Adrenal gland (tissue), 19 donors: ENCODE measurements at regions of chr1 and their contacts with region 1.

Region 1: GRCh38 chr1:212630158-212630900 is 21.8 kb downstream of the ATF3 start:
- DNase-seq: peak; percentile 56 to 85 (median 78)
- H3K4me3 ChIP-seq: no peak overlapping the region
- H3K27ac ChIP-seq: no peak overlapping the region
- H3K4me1 ChIP-seq: no peaks in the 10 kb centered on the region
- H3K27me3 ChIP-seq: no peaks in the 10 kb centered on the region
- CTCF ChIP-seq: peak; percentile 84 to 92 (median 86)
- POLR2A ChIP-seq: no peak

Region 2: DNA sequence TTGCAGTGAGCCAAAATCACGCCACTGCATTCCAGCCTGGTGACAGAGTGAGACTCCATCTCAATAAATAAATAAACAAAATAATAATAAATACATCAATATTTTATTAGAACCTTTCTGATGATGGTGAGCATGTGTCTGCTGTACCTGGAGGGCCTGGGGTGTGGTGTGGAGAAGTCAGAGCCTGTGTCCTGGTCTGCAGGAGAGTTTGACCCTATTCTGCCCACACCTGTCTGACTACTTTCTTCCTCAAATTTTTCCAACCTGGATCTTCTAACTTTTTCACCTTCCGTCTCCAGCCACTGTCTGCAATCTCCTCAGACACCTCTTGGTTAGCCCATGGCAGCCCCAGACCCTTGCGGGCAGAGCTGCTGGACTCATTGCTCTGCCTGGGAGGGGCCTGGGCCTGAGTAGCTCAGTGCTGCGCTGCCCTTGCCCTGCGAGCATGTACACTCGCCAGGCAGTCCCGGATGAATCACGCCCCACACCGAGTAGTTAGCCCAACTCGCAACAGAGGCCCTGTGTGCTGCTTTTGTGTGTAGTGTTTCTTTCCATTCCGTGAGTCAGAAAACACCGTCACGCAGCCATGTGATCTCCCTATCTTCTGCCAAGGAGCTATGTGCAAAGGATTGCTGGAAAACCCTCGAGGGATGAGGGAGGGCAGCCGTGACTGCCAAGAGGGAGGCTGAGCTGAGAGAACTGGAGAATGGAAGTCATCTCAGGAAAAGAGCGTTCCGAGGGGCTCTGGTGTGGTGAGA is 160.4 kb before region 1 on chr1:
- intact Hi-C with region 1: loop called (anchors 5 kb)
- DNase-seq: peak; percentile 80 to 98 (median 97)
- H3K4me3 ChIP-seq: no peak overlapping the region
- H3K27ac ChIP-seq: peak overlapping the region in 4 of 5 donors; percentile 33 to 91 (median 76)
- H3K4me1 ChIP-seq: peaks cover 0 to 4% of the 10 kb centered on the region in 2 donors
- H3K27me3 ChIP-seq: no peaks in the 10 kb centered on the region
- CTCF ChIP-seq: no peak
- POLR2A ChIP-seq: peak in 1 of 2 donors; percentile 51

Region 3: DNA sequence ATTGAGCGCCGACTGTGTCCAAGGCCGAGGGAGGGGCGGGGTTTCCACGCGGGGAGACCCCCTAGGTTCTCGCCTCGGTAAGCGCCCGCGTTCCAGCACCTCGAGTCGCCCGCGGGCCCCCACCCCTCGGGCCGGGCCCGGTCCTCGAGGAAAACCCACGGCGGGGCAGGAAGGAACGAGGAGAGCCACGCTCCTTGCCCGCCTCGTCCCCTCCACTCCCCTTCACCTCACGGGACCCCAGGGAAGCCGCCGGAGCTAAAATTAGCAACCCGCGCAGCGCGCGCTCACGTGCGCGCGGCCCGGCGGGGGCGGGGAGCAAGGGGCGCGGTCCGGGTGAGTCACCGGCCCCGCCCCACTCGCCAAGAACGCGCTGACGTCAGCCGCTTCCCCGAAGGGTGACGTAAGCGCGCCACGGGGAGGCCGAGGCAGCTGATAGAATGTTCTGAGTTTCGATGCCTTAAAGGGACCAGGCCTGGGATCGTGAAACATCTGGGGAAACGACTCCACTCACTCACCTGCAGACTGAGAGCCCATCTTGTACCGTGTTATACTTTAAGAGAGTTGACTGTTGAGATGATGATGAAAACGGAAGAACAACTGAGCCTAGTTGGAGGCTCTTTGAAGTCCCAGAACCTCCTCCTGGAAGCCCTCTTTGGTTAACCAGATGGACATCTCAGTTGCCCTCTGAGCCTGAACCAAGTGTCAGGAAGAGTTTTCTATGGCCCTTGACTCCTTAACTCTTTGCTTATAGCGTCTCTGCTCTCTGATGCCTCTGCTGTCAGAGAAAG is 71.4 kb before region 1 on chr1:
- intact Hi-C with region 1: no loop called
- DNase-seq: peak; percentile 90 to 96 (median 95)
- H3K4me3 ChIP-seq: peak overlapping the region in 2 of 4 donors; percentile 76 to 79
- H3K27ac ChIP-seq: peak overlapping the region; percentile 79 to 98 (median 89)
- H3K4me1 ChIP-seq: peaks cover 0 to 10% of the 10 kb centered on the region in 2 donors
- H3K27me3 ChIP-seq: no peaks in the 10 kb centered on the region
- CTCF ChIP-seq: peak in 1 of 6 experiments; percentile 20
- POLR2A ChIP-seq: peak; percentile 6 to 32

Region 4: GRCh38 chr1:212930986-212931678 is 300.8 kb after region 1 on chr1:
- intact Hi-C with region 1: no loop called
- DNase-seq: peak in 1 of 7 donors; percentile 7
- H3K4me3 ChIP-seq: no peak overlapping the region
- H3K27ac ChIP-seq: no peak overlapping the region
- H3K4me1 ChIP-seq: no peaks in the 10 kb centered on the region
- H3K27me3 ChIP-seq: no peaks in the 10 kb centered on the region
- CTCF ChIP-seq: no peak
- POLR2A ChIP-seq: no peak